ENCODE measurements at regions of chr7 and their contacts with region 1.

Region 1: GRCh38 chr7:11557627-11558026 is 274.4 kb downstream of the THSD7A start:
- DNase-seq: no peak
- H3K4me3 Mint-ChIP-seq: no peak overlapping the region
- H3K27ac Mint-ChIP-seq: no peak overlapping the region
- H3K4me1 Mint-ChIP-seq: no peaks in the 10 kb centered on the region
- H3K27me3 Mint-ChIP-seq: no peaks in the 10 kb centered on the region

Region 2: GRCh38 chr7:11427686-11428273 is 129.8 kb before region 1 on chr7:
- intact Hi-C with region 1: loop called (anchors 5 kb)
- DNase-seq: no peak
- H3K4me3 Mint-ChIP-seq: no peak overlapping the region
- H3K27ac Mint-ChIP-seq: no peak overlapping the region
- H3K4me1 Mint-ChIP-seq: no peaks in the 10 kb centered on the region
- H3K27me3 Mint-ChIP-seq: no peaks in the 10 kb centered on the region

Measured in activated T-helper 1 cell treated with anti-CD3 and anti-CD28 coated beads, Interleukin-12 subunit alpha, Interleukin-12 subunit beta, Interleukin-2, Interleukin-4 antibody, amounts not matched to agents 30 ng/mL and 10 ng/mL and 1 ng/mL, durations not matched to agents 14 hours and 24 hours and 36 hours (primary cell).